ENCODE measurements at regions of chr3 and their contacts with region 1.

Region 1: GRCh38 chr3:178436773-178437172 is 99.5 kb upstream of the KCNMB2 start:
- DNase-seq: no peak
- ATAC-seq: no peak

Region 2: DNA sequence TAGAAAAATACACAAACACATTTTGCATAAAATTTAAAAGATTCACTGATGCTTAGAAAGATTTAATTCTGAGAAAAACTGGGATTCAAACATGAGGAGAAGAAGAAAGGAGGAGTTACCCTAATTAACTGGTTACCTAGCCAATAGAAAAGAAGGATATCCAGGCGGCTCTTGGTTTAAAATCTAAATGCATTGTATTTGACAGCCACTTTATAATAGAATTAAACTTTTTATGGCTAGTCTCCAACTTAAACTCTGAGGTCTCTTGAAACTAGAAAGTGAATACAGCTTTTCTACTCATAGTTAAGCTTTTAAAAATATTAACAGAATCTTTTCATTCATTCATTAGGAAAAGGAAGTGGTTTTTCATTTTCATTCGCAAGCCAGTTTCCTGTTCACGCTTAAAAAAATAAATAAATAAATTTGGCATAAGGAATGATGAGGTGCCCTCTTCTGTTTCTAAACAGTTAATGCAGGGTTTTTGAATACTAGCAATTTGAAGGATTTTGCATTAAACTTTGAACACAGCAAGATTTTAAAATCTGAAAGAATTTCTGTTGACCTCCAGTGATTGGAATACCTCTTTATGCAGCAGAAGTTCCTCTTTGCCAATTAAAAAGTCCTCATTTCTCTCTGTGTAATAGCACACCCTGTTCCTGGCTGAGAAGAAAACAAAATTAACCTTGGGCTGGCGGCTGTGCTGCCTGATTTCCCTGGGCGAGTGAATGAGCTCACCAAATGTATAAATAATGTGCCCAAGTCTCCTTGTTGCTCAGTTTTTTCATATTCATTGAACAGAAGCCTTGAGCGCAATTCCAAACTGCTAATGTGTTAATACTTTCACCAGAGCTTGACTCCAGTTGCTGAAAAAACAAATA is 529.8 kb after region 1 on chr3:
- intact Hi-C with region 1: loop called (anchors 5 to 10 kb)
- DNase-seq: no peak
- ATAC-seq: peak; percentile 42